B cell (primary cell): ENCODE measurements at regions of chr4 and their contacts with region 1.

Region 1: GRCh38 chr4:5460116-5460801 is 248.1 kb downstream of the EVC2 start:
- DNase-seq: peak; percentile 20
- ATAC-seq: no peak
- H3K4me3 ChIP-seq: no peak overlapping the region
- H3K4me3 Mint-ChIP-seq: no peak overlapping the region
- H3K27ac ChIP-seq: no peak overlapping the region
- H3K27ac Mint-ChIP-seq: no peak overlapping the region
- H3K4me1 ChIP-seq: no peaks in the 10 kb centered on the region
- H3K4me1 Mint-ChIP-seq: no peaks in the 10 kb centered on the region
- H3K27me3 ChIP-seq: no peaks in the 10 kb centered on the region
- H3K27me3 Mint-ChIP-seq: no peaks in the 10 kb centered on the region
- CTCF ChIP-seq: peak; percentile 30

Region 2: GRCh38 chr4:5050520-5051277 is 409.6 kb before region 1 on chr4:
- CTCF ChIA-PET with region 1: interaction called, 11 read pairs
- POLR2A ChIA-PET with region 1: no interaction called
- intact Hi-C with region 1: no loop called
- DNase-seq: peak; percentile 35
- ATAC-seq: peak; percentile 31
- H3K4me3 ChIP-seq: peak overlapping the region; percentile 35 to 61 (median 53)
- H3K4me3 Mint-ChIP-seq: peak overlapping the region; percentile 89
- H3K27ac ChIP-seq: no peak overlapping the region
- H3K27ac Mint-ChIP-seq: no peak overlapping the region
- H3K4me1 ChIP-seq: peaks cover 15 to 19% of the 10 kb centered on the region in 2 donors
- H3K4me1 Mint-ChIP-seq: peaks cover 16% of the 10 kb centered on the region
- H3K27me3 ChIP-seq: peaks cover 0 to 40% (median 17%) of the 10 kb centered on the region in 4 experiments
- H3K27me3 Mint-ChIP-seq: peaks cover 51% of the 10 kb centered on the region
- CTCF ChIP-seq: peak; percentile 22

Region 3: GRCh38 chr4:5497489-5497888 is 37.2 kb after region 1 on chr4:
- CTCF ChIA-PET with region 1: no interaction called
- POLR2A ChIA-PET with region 1: no interaction called
- intact Hi-C with region 1: no loop called
- DNase-seq: no peak
- ATAC-seq: no peak
- H3K4me3 ChIP-seq: no peak overlapping the region
- H3K4me3 Mint-ChIP-seq: no peak overlapping the region
- H3K27ac ChIP-seq: no peak overlapping the region
- H3K27ac Mint-ChIP-seq: no peak overlapping the region
- H3K4me1 ChIP-seq: no peaks in the 10 kb centered on the region
- H3K4me1 Mint-ChIP-seq: no peaks in the 10 kb centered on the region
- H3K27me3 ChIP-seq: no peaks in the 10 kb centered on the region
- H3K27me3 Mint-ChIP-seq: no peaks in the 10 kb centered on the region
- CTCF ChIP-seq: no peak